ENCODE measurements at regions of chr6 and their contacts with region 1.

Region 1: GRCh38 chr6:170087941-170088581 is 202.8 kb downstream of the DLL1 start:
- DNase-seq: peak; percentile 74
- H3K4me3 ChIP-seq: peak overlapping the region; percentile 49
- H3K27ac ChIP-seq: peak overlapping the region; percentile 69
- H3K4me1 ChIP-seq: peaks cover 31% of the 10 kb centered on the region
- CTCF ChIP-seq: no peak

Region 2: GRCh38 chr6:169990095-169991030 is 97.7 kb before region 1 on chr6:
- CTCF ChIA-PET with region 1: no interaction called
- POLR2A ChIA-PET with region 1: no interaction called
- intact Hi-C with region 1: loop called (anchors 10 kb)
- DNase-seq: peak; percentile 58
- H3K4me3 ChIP-seq: peak overlapping the region; percentile 5
- H3K27ac ChIP-seq: peak overlapping the region; percentile 12
- H3K4me1 ChIP-seq: peaks cover 17% of the 10 kb centered on the region
- CTCF ChIP-seq: peak; percentile 44

Region 3: DNA sequence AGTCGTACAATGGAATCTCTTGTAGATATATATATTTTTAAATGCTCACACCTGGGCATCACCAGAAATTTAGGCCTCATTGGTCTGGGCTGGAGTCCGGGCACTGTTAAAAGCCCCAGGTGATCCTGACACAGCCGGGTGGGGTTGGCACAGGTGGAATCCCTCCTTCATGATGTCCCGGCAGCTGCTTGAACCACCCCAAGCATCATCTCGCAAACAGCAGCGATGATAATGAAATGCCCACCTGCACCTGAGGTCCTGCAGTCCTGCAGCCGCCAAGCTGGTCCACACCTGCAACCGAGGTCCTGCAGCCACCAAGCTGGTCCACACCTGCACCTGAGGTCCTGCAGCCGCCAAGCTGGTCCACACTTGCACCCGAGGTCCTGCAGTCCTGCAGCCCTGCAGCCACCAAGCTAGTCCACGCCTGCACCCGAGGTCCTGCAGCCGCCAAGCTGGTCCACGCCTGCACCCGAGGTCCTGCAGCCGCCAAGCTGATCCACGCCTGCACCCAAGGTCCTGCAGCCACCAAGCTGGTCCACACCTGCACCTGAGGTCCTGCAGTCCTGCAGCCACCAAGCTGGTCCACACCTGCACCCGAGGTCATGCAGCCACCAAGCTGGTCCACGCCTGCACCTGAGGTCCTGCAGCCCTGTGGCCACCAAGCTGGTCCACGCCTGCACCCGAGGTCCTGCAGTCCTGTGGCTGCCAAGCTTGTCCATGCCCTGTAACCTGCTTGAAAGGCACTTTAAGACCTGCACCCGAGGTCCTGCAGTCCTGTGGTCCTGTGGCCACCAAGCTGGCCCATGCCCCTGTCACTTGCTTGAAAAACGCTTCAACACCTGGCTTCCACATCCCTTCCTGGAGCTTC is 58.4 kb before region 1 on chr6:
- CTCF ChIA-PET with region 1: interaction called, 12 read pairs
- POLR2A ChIA-PET with region 1: no interaction called
- intact Hi-C with region 1: no loop called
- DNase-seq: no peak
- H3K4me3 ChIP-seq: no peak overlapping the region
- H3K27ac ChIP-seq: no peak overlapping the region
- H3K4me1 ChIP-seq: no peaks in the 10 kb centered on the region
- CTCF ChIP-seq: no peak

Region 4: DNA sequence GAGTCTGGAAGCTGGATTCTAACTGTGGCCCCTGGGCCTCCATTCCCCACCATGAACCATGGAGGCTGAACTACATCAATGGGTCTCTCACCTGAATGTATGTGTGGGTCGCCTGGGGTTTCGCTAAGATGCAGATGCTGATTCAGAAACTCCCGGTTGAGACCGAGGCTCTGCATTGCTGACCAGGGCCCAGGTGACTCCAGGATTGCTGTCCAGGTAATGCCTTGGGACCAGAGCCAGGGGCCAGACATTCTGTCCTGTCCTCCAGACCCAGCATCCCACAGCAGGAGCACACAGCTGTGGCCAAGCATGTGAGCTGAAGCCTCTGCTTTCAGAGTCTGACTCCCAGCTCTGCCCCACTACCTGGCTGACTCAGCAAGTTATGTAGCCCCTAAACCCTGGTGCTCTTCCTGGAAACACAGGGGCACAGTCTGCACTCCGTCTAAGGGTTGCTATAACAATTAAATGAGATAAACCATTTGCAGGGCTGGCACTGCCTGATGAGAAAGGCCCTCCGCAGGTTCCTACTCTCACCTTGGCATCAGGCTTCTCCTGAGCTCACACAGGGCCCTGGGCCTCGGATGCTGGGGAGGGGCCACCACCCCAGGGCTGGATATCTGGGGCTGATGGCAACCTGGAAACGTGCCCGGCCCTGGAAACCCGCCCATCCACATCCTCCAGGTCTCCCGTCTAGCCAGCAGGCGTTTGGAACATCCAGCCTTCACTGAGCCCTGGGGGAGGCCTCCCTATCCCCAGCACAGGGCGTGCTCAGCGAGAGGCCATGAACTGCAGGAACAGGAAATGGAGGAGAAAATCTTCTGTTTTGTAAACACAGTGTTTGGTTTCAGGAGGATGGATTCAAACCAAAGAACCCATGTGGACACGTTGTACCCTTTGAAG is 27.1 kb after region 1 on chr6:
- CTCF ChIA-PET with region 1: no interaction called
- POLR2A ChIA-PET with region 1: no interaction called
- intact Hi-C with region 1: no loop called
- DNase-seq: no peak
- H3K4me3 ChIP-seq: no peak overlapping the region
- H3K27ac ChIP-seq: no peak overlapping the region
- H3K4me1 ChIP-seq: no peaks in the 10 kb centered on the region
- CTCF ChIP-seq: no peak

Measured in OCI-LY7 (cell line).